Tibial artery (tissue), 4 donors: ENCODE measurements at regions of chr7 and their contacts with region 1.

Region 1: GRCh38 chr7:101138213-101138870 is 11.4 kb downstream of the SERPINE1 start:
- DNase-seq: peak; percentile 96
- H3K4me3 ChIP-seq: peak overlapping the region; percentile 17 to 21
- H3K27ac ChIP-seq: peak overlapping the region; percentile 78 to 82
- H3K4me1 ChIP-seq: peaks cover 0 to 33% (median 9%) of the 10 kb centered on the region in 4 donors
- H3K27me3 ChIP-seq: no peaks in the 10 kb centered on the region
- CTCF ChIP-seq: peak; percentile 81 to 84

Region 2: GRCh38 chr7:100538654-100539435 is 599.5 kb before region 1 on chr7 and contains the start of gene AGFG2:
- intact Hi-C with region 1: no loop called
- DNase-seq: peak; percentile 100
- H3K4me3 ChIP-seq: peak within 1 kb of the TSS; percentile 60 to 90
- H3K27ac ChIP-seq: peak within 1 kb of the TSS; percentile 75 to 78
- H3K4me1 ChIP-seq: peaks cover 0 to 29% (median 21%) of the 10 kb centered on the region in 4 donors
- H3K27me3 ChIP-seq: no peaks in the 10 kb centered on the region
- CTCF ChIP-seq: peak in 1 of 2 experiments; percentile 12

Region 3: GRCh38 chr7:101085162-101085987 is 53.0 kb before region 1 on chr7 and contains the start of gene TRIM56:
- intact Hi-C with region 1: loop called (anchors 2 kb)
- DNase-seq: peak; percentile 85 to 94
- H3K4me3 ChIP-seq: peak within 1 kb of the TSS; percentile 78 to 92
- H3K27ac ChIP-seq: peak within 1 kb of the TSS; percentile 93 to 96
- H3K4me1 ChIP-seq: peaks cover 0 to 45% (median 38%) of the 10 kb centered on the region in 4 donors
- H3K27me3 ChIP-seq: peaks cover 0 to 1% of the 10 kb centered on the region in 2 donors
- CTCF ChIP-seq: no peak

Region 4: GRCh38 chr7:101094416-101095375 is 43.6 kb before region 1 on chr7:
- intact Hi-C with region 1: loop called (anchors 2 kb)
- DNase-seq: no peak
- H3K4me3 ChIP-seq: no peak overlapping the region
- H3K27ac ChIP-seq: peak overlapping the region; percentile 37 to 48
- H3K4me1 ChIP-seq: peaks cover 0 to 33% (median 25%) of the 10 kb centered on the region in 4 donors
- H3K27me3 ChIP-seq: no peaks in the 10 kb centered on the region
- CTCF ChIP-seq: peak; percentile 54 to 59

Region 5: GRCh38 chr7:101197991-101198390 is 59.6 kb after region 1 on chr7:
- intact Hi-C with region 1: loop called (anchors 10 kb)
- DNase-seq: no peak
- H3K4me3 ChIP-seq: no peak overlapping the region
- H3K27ac ChIP-seq: no peak overlapping the region
- H3K4me1 ChIP-seq: peaks cover 0 to 11% (median 9%) of the 10 kb centered on the region in 4 donors
- H3K27me3 ChIP-seq: peaks cover 0 to 83% of the 10 kb centered on the region in 2 donors
- CTCF ChIP-seq: no peak

Region 6: GRCh38 chr7:101287032-101287431 is 148.7 kb after region 1 on chr7:
- intact Hi-C with region 1: loop called (anchors 10 kb)
- DNase-seq: no peak
- H3K4me3 ChIP-seq: no peak overlapping the region
- H3K27ac ChIP-seq: no peak overlapping the region
- H3K4me1 ChIP-seq: peaks cover 0 to 4% (median 2%) of the 10 kb centered on the region in 4 donors
- H3K27me3 ChIP-seq: peaks cover 0 to 35% of the 10 kb centered on the region in 2 donors
- CTCF ChIP-seq: no peak

Region 7: GRCh38 chr7:101308245-101309085 is 170.1 kb after region 1 on chr7:
- intact Hi-C with region 1: no loop called
- DNase-seq: no peak
- H3K4me3 ChIP-seq: peak overlapping the region; percentile 22 to 45
- H3K27ac ChIP-seq: no peak overlapping the region
- H3K4me1 ChIP-seq: peaks cover 0 to 14% (median 10%) of the 10 kb centered on the region in 4 donors
- H3K27me3 ChIP-seq: peaks cover 0 to 63% of the 10 kb centered on the region in 2 donors
- CTCF ChIP-seq: no peak

Region 8: GRCh38 chr7:101402088-101402779 is 263.9 kb after region 1 on chr7:
- intact Hi-C with region 1: no loop called
- DNase-seq: no peak
- H3K4me3 ChIP-seq: no peak overlapping the region
- H3K27ac ChIP-seq: no peak overlapping the region
- H3K4me1 ChIP-seq: peaks cover 0 to 8% (median 2%) of the 10 kb centered on the region in 4 donors
- H3K27me3 ChIP-seq: peaks cover 0 to 38% of the 10 kb centered on the region in 2 donors
- CTCF ChIP-seq: no peak